Heart left ventricle (tissue), 16 donors: ENCODE measurements at regions of chr19 and their contacts with region 1.

Region 1: DNA sequence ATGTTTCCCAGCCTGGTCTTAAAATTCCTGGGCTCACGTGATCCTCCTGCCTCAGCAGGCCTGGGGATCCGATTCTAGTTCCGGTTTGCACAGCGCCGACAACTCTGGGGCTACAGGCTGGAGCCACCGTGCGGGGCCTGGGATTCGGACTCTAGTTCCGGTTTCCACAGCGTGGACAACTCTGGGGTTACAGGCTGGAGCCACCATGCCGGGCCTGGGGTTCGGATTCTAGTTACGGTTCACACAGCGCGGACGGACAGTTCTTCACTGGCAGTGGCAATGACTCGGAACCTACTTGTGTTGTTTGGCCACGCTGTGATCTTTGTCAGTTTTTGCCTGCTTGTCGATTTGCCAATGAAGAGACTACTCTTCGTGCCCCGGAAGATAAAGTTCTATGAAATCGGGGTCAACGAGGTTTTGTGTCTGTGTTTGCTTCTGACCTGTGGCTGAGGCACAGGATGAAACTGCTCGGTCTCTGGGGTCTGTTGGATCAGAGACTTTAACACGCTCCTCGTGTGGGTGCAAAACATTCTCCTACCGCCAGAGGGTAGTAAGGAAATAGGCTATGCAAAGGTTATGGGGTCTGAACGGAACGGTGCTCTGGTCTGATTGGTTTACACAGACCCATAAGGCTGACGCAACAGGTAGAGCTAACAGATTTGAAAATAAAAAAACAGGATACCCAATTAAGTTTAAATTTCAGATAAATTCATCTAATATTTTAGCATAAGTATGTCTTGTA is 12.1 kb upstream of the ZSCAN1 start:
- DNase-seq: peak in 4 of 5 donors; percentile 58 to 70 (median 66)
- ATAC-seq: peak; percentile 91 to 97 (median 94)
- H3K4me3 ChIP-seq: no peak overlapping the region
- H3K27ac ChIP-seq: no peak overlapping the region
- H3K4me1 ChIP-seq: peaks cover 0 to 6% (median 0%) of the 10 kb centered on the region in 12 donors
- H3K27me3 ChIP-seq: no peaks in the 10 kb centered on the region
- CTCF ChIP-seq: peak; percentile 42 to 83 (median 78)
- POLR2A ChIP-seq: no peak

Region 2: DNA sequence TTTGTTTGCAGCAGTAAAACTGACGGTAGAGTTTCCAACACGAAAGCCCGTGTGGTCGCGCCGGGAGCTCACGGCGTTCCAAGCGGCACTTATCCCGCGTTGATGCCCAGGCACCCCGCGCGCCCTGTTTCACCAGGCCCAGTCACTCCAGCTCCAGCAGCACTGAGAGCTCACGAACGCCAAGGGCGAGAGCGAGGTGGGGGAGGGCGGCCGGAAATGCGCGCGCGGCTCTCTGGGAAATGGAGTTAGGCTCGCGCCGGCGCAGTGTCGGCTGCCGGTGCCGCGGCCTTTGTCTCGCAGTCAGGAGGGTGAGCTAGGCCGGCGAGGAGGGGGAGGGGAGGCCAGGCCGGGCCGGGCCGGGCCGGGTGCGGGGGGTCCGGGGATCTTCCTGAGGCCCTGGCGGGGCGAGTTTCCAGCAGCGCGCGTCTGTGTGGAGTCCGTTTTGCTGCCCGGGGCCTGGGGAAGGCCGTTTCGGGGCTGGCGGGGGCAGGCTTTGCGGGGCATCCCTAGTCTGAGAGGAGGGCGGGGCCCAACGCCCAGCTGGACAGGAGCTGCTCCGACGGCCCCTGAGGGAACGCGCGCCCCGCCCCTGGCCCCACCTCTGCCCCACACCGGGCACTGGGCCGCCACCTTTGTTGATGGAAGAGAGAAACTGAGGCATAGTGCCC is 37.4 kb after region 1 on chr19 and contains the start of gene ZNF135:
- intact Hi-C with region 1: loop called in 1 of 10 experiments (anchors 5 kb)
- DNase-seq: peak; percentile 93 to 95 (median 94)
- ATAC-seq: peak; percentile 95 to 97 (median 97)
- H3K4me3 ChIP-seq: peak within 1 kb of the TSS; percentile 47 to 95 (median 72)
- H3K27ac ChIP-seq: peak within 1 kb of the TSS; percentile 78 to 100 (median 95)
- H3K4me1 ChIP-seq: peaks cover 0 to 25% (median 11%) of the 10 kb centered on the region in 12 donors
- H3K27me3 ChIP-seq: no peaks in the 10 kb centered on the region
- CTCF ChIP-seq: no peak
- POLR2A ChIP-seq: peak in 1 of 2 donors; percentile 31
- total RNA-seq, gene ZNF135: 2.1 to 4.5 (median 3.4) TPM

Region 3: DNA sequence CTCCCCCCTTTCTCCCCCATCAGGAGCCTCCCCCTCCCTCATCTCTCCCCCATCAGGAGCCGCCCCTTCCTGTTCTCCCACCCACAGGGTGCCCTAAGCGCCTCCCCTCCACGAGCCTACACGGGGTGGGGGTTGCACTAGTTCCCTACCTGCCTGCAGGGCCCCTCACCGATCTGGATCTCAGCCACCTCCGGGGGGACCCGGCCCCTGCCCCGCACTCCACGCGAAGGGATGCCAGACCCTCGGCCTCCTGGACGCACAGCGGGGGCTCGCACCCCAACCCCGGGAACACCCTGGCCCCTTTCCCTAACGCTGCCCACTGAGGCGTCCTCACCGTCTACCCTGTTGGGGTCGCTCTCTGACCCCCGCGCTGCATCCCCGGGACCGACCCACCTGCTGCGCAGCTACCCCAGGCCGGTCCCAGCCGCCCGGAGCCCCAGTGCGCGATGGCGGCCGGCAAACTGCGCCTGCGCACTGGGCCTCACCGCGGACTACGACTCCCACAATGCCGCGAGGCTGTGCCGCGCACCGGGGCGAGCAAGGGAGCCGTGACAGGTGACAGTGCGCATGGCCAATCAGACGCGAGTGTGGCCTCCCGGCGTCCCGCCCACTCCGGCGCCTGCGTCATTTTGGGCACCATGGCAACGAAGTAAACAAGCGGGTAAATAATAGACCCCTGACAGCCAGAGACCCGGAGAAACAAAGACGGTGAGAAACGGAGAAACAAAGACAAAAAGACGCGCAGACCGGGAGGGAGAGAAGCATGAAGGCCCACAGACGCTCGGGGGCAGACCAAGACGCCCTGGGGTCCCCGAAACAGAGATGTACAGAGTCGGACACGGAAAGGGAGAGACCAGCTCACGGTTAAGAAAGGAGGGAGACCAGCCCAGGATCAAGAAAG is 76.3 kb after region 1 on chr19 and contains the start of gene ZSCAN18:
- intact Hi-C with region 1: loop called in 1 of 10 experiments (anchors 5 kb)
- DNase-seq: peak; percentile 98 to 99 (median 99)
- ATAC-seq: peak; percentile 99 to 100 (median 100)
- H3K4me3 ChIP-seq: peak within 1 kb of the TSS; percentile 83 to 100 (median 98)
- H3K27ac ChIP-seq: peak within 1 kb of the TSS; percentile 52 to 98 (median 94)
- H3K4me1 ChIP-seq: peaks cover 0 to 24% (median 10%) of the 10 kb centered on the region in 12 donors
- H3K27me3 ChIP-seq: no peaks in the 10 kb centered on the region
- CTCF ChIP-seq: no peak
- POLR2A ChIP-seq: peak in 1 of 2 donors; percentile 86
- total RNA-seq, gene ZSCAN18: 45.1 to 114 (median 73.4) TPM

Region 4: DNA sequence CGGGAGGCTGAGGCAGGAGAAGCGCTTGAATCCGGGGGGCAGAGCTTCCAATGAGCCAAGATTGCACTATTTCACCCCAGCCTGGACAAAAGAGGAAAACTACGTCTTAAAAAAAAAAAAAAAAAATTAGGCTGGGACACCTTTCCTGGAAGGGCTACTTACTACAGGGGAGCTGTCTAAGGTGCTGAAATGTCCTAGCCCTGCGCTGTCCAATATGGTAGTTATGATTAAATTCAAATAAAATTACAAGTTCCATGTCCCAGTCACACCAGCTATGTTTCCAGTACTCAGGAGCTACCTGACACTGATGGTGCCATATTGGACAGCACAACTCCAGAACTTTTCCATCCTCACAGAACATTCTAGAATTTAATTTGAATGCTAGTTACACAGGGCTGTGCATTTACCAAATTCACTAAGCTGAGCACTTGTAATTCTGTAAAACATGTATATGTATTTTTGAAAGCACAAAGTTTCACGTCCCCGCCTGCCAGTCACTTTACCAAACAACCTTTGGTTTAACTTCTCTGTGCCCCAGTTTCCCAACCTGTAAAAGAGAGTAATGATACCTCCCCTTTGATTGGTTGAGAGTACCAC is 295.9 kb after region 1 on chr19:
- intact Hi-C with region 1: loop called in 1 of 10 experiments (anchors 10 kb)
- DNase-seq: no peak
- ATAC-seq: peak in 1 of 4 donors; percentile 21
- H3K4me3 ChIP-seq: no peak overlapping the region
- H3K27ac ChIP-seq: no peak overlapping the region
- H3K4me1 ChIP-seq: no peaks in the 10 kb centered on the region
- H3K27me3 ChIP-seq: no peaks in the 10 kb centered on the region
- CTCF ChIP-seq: no peak
- POLR2A ChIP-seq: no peak